ENCODE measurements at regions of chr9 and their contacts with region 1.

Region 1: DNA sequence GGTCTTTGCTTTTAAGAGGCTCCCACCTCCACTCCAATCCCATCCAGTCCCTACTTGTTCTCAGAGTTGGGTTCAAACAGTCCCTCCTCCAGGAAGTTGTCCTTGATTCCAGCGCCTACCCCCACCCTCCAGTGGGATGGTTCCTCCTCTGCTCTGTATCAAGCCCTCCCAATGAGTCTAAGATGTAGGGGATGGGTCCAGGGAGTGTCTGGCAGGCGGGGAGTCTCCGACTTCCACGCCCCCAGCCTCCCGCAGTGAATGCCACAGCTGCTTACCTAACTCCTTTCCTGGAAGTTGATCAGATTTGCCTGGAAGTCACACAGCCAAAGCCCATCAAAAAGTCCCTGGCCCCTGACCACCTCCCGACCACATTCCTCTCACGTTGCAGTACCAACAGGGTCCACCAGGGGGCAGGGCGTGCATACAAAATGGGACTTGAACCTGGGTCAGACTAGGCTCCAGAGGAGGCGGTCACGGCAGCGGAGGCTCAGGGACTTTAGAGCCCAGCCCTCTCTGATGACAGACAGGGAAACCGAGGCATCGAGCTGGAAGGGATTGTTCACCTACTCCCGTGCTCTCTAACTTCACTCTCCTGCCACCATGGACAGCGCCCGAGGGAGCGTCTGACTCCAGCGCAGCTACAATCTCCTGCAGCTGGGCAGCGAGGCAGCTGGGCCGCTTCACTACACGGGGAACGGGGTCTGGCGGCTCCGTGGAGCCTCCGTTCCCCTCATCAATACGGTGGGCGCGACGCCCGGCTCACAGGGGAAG is 25.0 kb upstream of the TDRD7 start:
- DNase-seq: peak; percentile 64
- H3K4me3 Mint-ChIP-seq: no peak overlapping the region
- H3K27ac Mint-ChIP-seq: no peak overlapping the region
- H3K4me1 Mint-ChIP-seq: peaks cover 24% of the 10 kb centered on the region
- H3K27me3 Mint-ChIP-seq: peaks cover 10% of the 10 kb centered on the region

Region 2: GRCh38 chr9:97398999-97399758 is 12.3 kb after region 1 on chr9:
- CTCF ChIA-PET with region 1: interaction called, 36 read pairs
- POLR2A ChIA-PET with region 1: no interaction called
- DNase-seq: peak; percentile 55
- H3K4me3 Mint-ChIP-seq: no peak overlapping the region
- H3K27ac Mint-ChIP-seq: no peak overlapping the region
- H3K4me1 Mint-ChIP-seq: peaks cover 26% of the 10 kb centered on the region
- H3K27me3 Mint-ChIP-seq: peaks cover 46% of the 10 kb centered on the region

Region 3: GRCh38 chr9:97406620-97407177 is 19.8 kb after region 1 on chr9:
- CTCF ChIA-PET with region 1: interaction called, 10 read pairs
- POLR2A ChIA-PET with region 1: no interaction called
- DNase-seq: no peak
- H3K4me3 Mint-ChIP-seq: no peak overlapping the region
- H3K27ac Mint-ChIP-seq: no peak overlapping the region
- H3K4me1 Mint-ChIP-seq: peaks cover 5% of the 10 kb centered on the region
- H3K27me3 Mint-ChIP-seq: peaks cover 63% of the 10 kb centered on the region

Measured in activated CD4-positive, alpha-beta T cell treated with anti-CD3 and anti-CD28 coated beads, Interleukin-2, amount 10 ng/mL, durations not matched to agents 7 days and 5 days (primary cell).